Keratinocyte (primary cell): ENCODE measurements at regions of chr17 and their contacts with region 1.

Region 1: DNA sequence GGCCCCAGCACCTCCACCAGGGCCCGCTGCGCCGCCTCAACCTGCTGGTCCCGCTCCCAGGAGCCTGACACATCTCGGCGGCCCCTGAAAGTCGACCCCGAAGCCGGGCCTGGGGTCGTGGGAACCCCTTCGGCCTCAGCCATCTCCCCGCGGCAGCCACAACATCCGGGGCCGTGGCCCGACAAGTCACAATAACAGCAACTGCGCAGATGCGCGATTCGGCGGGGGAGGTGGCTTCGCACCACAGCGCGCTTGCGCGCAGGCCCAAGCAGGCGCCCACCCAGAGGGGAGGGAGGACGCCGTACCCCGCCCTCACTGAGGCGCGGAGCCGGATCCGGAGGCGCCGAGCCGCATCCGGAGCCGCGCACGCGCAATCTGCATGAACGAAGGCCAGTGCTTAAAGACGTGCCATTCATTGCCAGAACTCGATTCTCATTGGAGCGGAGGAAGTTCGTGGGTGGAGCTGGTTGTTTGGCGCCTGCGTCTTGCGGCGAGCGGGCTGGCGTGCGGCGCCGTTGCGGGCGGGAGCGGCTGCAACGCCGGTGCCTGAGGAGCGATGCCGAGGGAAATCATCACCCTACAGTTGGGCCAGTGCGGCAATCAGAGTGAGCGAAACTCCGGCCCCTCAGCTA is at the starts of genes RETREG3 and TUBG1:
- DNase-seq: peak; percentile 94
- H3K4me3 ChIP-seq: peak within 1 kb of the TSS; percentile 80 to 100 (median 98)
- H3K27ac ChIP-seq: peak within 1 kb of the TSS; percentile 89
- H3K4me1 ChIP-seq: peaks cover 18% of the 10 kb centered on the region
- H3K27me3 ChIP-seq: no peaks in the 10 kb centered on the region
- CTCF ChIP-seq: peak in 1 of 3 experiments; percentile 74
- polyA plus RNA-seq, gene RETREG3: 25.2 to 49.5 TPM (median 32.5 TPM) in 3 replicates
- polyA plus RNA-seq, gene TUBG1: 35.1 to 141 TPM (median 54.8 TPM) in 3 replicates

Region 2: DNA sequence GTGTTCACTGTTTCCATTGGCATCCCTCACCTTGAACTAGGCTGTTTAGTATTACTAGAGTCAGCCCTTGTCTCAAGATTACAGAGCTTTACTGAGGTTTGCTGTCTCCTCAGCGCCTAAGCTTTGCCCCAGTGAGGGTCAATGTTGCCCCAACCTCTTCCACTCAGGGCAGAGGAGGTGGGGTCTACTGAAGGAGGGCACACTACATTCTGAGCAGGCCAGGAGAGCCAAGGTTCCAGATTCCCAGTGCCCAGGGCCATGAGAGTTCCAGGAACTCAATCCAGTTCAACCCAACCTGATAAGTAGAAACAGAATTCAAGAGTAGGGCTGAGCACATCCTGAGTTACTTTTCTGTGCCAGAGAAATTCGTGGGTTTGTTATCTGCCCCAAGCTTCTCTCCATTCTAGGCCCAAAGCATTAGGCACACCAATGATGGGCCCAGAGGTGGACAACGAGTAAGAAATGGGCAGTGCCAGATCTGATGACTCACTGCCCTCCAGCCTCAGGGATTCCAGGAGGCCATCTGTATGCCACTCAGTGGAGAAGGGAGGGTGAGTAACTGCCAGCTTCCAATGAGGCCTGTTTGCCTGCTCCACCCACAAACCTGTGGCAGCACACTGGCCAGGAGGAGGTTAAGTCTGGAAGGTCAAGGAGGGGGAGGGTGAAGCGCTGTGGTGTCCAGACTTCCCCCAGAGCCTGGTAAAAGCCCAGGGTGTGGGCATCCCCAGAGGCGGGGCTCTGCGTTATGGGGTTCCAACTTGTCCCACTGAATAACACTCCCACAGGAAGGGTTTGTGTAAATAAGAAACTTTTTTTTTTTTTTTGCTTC is 58.0 kb after region 1 on chr17:
- dilution Hi-C with region 1: loop called (anchors 10 kb)
- DNase-seq: no peak
- H3K4me3 ChIP-seq: no peak overlapping the region
- H3K27ac ChIP-seq: peak overlapping the region; percentile 3
- H3K4me1 ChIP-seq: peaks cover 30% of the 10 kb centered on the region
- H3K27me3 ChIP-seq: no peaks in the 10 kb centered on the region
- CTCF ChIP-seq: no peak